ENCODE measurements at regions of chr5 and their contacts with region 1.

Region 1: GRCh38 chr5:101995585-101995984 is 300.5 kb downstream of the SLCO4C1 start:
- DNase-seq: peak; percentile 57
- H3K4me3 Mint-ChIP-seq: peak overlapping the region; percentile 25
- H3K27ac Mint-ChIP-seq: peak overlapping the region; percentile 74
- H3K4me1 Mint-ChIP-seq: peaks cover 31% of the 10 kb centered on the region
- H3K27me3 Mint-ChIP-seq: no peaks in the 10 kb centered on the region
- CTCF ChIP-seq: no peak

Region 2: DNA sequence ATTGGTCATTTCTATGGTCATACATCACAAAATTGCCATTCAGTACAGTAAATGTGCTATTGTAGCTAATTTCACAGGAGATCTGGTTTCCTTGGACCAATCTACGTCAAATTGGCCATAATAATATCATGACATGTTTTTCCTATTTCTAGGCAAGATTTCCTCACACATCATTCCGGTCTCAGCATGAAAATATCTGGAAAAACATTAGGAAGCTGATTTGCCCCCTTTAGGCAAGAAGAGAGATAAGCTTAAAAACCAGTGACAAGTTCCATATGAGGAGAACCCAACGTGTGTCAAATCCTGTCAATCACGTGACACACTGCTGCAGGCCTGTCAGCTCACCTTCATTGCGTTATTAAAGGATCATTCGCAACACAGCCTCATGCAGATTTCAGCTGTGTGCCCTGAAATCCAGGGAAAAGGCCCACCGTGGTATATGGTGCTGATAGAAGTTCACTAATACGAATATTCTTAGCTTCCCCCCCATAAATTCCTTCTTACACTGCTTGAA is 1245.8 kb before region 1 on chr5:
- CTCF ChIA-PET with region 1: interaction called, 11 read pairs
- intact Hi-C with region 1: no loop called
- DNase-seq: no peak
- H3K4me3 Mint-ChIP-seq: no peak overlapping the region
- H3K27ac Mint-ChIP-seq: no peak overlapping the region
- H3K4me1 Mint-ChIP-seq: no peaks in the 10 kb centered on the region
- H3K27me3 Mint-ChIP-seq: no peaks in the 10 kb centered on the region
- CTCF ChIP-seq: no peak

Region 3: GRCh38 chr5:101977729-101978345 is 17.7 kb before region 1 on chr5:
- CTCF ChIA-PET with region 1: interaction called, 3 read pairs
- intact Hi-C with region 1: loop called (anchors 1 kb)
- DNase-seq: peak; percentile 20
- H3K4me3 Mint-ChIP-seq: no peak overlapping the region
- H3K27ac Mint-ChIP-seq: no peak overlapping the region
- H3K4me1 Mint-ChIP-seq: peaks cover 7% of the 10 kb centered on the region
- H3K27me3 Mint-ChIP-seq: no peaks in the 10 kb centered on the region
- CTCF ChIP-seq: peak; percentile 64

Region 4: DNA sequence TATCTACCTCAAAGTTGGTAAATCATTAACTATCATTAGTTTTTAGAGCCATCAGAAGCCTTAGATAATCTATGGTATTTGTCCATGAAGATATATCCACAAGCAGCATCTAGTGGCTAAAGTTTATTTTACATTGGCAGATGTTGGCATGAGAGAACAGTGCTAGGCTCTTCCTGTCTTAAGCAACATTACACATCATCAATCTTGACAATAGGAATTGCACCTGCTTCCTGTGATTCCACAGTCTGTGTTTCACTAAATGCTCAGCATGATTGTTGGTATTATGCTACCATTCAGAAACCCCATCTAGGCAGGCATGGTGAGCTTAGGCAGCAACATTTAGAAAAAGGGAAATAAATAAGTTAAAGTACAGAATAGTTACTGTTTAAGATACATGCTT is 53.9 kb after region 1 on chr5:
- CTCF ChIA-PET with region 1: interaction called, 10 read pairs
- intact Hi-C with region 1: loop called (anchors 5 kb)
- DNase-seq: no peak
- H3K4me3 Mint-ChIP-seq: no peak overlapping the region
- H3K27ac Mint-ChIP-seq: no peak overlapping the region
- H3K4me1 Mint-ChIP-seq: peaks cover 9% of the 10 kb centered on the region
- H3K27me3 Mint-ChIP-seq: no peaks in the 10 kb centered on the region
- CTCF ChIP-seq: no peak

Region 5: DNA sequence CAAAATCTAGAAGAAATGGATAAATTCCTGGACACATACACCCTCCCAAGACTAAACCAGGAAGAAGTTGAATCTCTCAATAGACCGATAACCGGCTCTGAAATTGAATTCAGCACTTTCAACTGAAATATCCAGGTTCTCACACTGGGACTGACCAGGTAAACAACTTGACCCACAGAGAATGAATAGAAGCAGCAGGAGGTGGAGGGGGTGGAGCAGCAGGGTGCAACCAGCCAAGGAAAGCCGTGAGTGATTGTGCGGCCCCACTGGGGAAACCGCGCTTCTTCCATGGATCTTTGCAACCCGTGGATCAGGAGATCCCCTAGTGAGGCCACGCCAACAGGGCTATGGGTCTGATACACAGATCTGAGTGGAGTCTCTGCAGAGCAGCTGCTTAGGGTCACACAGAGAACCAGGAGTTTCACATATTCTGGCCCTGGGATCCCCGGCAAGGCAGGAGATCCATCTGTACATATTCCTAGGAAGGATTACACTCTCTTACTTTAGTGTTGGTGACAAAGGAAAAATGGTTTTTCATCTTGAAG is 119.0 kb after region 1 on chr5:
- CTCF ChIA-PET with region 1: no interaction called
- intact Hi-C with region 1: no loop called
- DNase-seq: no peak
- H3K4me3 Mint-ChIP-seq: no peak overlapping the region
- H3K27ac Mint-ChIP-seq: no peak overlapping the region
- H3K4me1 Mint-ChIP-seq: no peaks in the 10 kb centered on the region
- H3K27me3 Mint-ChIP-seq: no peaks in the 10 kb centered on the region
- CTCF ChIP-seq: no peak

Measured in Calu3 (cell line).